Activated B cell treated with CpG ODN at 0.5 μM for 24 hours (primary cell): ENCODE measurements at regions of chr5 and their contacts with region 1.

Region 1: DNA sequence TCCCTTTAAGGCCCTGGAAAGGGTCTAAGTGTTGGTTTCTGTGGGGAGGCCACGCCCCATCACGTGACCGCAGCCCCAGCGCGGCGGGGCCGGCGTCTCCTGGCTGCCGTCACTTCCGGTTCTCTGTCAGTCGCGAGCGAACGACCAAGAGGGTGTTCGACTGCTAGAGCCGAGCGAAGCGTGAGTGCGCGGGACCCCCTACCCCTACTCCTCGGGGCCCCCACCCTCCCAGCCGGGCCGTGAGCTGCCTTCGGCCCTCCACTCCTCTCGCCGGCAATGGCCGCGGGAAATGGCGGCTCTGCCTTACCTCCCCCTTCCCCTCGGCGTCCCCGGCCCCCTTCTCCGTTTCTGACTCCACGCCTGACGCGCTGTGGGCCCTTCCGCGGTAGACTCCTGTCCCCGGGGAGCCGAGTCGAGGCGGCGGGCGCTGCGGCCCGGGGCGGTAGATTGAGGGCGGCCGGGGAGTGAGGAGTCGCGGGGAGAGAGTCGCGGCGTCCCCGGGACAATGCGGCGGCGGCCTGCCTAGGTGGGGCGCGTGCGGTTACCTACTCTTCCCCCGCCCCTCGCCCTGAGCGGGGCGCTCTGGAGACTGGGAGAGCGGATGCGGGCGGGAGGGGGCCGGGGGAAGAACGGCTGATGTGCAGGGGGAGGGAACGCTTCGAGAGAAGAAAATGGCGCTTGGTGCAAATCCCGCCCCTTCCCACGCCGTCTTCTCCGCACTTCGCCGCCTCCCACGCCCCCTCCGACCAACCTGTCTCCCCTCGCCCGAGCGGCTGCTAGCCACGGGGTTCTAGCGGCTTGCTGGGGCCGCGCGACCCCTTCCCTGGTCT is at the start of gene SUB1:
- DNase-seq: peak; percentile 88
- ATAC-seq: peak; percentile 60
- H3K4me3 Mint-ChIP-seq: peak within 1 kb of the TSS; percentile 91
- H3K27ac Mint-ChIP-seq: peak within 1 kb of the TSS; percentile 95
- H3K4me1 Mint-ChIP-seq: peaks cover 85% of the 10 kb centered on the region
- H3K27me3 Mint-ChIP-seq: no peaks in the 10 kb centered on the region
- CTCF ChIP-seq: no peak
- total RNA-seq, gene SUB1: 213 and 237 TPM in 2 replicates

Region 2: DNA sequence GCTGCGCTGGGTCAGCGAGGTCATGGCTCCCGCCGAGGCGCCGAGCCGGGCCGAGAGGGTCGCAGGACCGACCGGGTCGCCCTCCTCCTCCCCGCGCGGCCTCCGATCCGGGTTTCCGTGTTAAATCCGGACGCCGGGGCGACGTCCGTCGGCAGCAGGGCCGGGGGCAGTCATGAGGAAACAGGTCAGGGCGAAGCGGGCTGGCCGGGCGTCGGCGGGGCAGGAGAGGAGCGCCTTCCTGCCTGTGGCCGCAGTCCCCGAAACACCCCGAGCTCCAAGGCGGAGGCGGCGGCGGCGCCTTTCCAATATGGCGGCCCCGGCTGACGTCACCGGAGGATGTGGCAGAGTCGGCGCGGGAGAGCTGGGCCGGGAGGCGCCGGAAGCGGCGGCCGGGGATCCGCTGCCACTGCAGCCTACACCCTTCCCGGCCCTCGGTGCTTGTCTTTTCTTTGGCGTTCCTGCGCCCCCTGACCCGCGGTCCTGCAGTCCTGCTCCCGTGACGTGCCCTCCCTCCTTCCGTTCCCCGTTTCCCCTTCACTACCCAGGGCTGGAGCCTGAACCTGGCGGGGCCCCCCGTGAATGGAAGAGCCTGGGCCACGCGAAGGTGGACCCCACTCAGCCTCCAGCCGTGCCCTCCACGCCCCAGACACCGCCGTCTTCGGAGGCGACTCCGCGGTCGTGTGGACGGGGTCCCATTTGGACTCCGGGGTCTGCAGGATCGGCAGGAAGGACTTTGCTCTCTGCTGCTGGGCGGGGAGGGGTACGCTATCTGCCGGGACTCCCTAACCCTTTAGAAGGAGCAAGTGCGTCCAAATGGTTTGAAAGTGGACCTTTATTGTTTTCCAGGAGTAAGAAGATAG is 411.4 kb before region 1 on chr5 and contains the start of gene GOLPH3:
- CTCF ChIA-PET with region 1: no interaction called
- POLR2A ChIA-PET with region 1: interaction called, 4 read pairs
- intact Hi-C with region 1: loop called (anchors 1 kb)
- DNase-seq: peak; percentile 86
- ATAC-seq: peak; percentile 89
- H3K4me3 Mint-ChIP-seq: peak within 1 kb of the TSS; percentile 96
- H3K27ac Mint-ChIP-seq: peak within 1 kb of the TSS; percentile 92
- H3K4me1 Mint-ChIP-seq: peaks cover 40% of the 10 kb centered on the region
- H3K27me3 Mint-ChIP-seq: no peaks in the 10 kb centered on the region
- CTCF ChIP-seq: no peak
- total RNA-seq, gene GOLPH3: 55.5 and 60.1 TPM in 2 replicates

Region 3: DNA sequence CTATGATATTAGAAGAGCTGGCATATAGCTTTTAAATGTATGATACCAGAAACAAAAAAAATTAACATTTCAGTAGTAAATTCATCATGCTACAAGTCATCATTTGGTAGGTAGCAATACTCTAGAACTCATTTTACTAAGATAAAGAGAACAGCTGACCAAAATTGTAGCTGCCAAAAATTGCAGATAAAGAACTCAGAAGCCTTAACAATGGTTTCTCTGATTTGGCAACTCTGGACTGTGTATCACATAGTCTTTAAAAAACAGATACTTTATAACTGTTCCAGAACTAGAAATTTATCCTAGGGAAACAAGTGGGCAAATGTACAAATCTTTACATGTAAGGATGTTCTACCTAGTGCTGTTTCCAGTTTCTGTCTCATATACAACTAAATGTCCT is 175.0 kb before region 1 on chr5:
- CTCF ChIA-PET with region 1: interaction called, 10 read pairs
- POLR2A ChIA-PET with region 1: no interaction called
- intact Hi-C with region 1: loop called (anchors 10 kb)
- DNase-seq: no peak
- ATAC-seq: no peak
- H3K4me3 Mint-ChIP-seq: no peak overlapping the region
- H3K27ac Mint-ChIP-seq: no peak overlapping the region
- H3K4me1 Mint-ChIP-seq: peaks cover 10% of the 10 kb centered on the region
- H3K27me3 Mint-ChIP-seq: no peaks in the 10 kb centered on the region
- CTCF ChIP-seq: no peak

Region 4: DNA sequence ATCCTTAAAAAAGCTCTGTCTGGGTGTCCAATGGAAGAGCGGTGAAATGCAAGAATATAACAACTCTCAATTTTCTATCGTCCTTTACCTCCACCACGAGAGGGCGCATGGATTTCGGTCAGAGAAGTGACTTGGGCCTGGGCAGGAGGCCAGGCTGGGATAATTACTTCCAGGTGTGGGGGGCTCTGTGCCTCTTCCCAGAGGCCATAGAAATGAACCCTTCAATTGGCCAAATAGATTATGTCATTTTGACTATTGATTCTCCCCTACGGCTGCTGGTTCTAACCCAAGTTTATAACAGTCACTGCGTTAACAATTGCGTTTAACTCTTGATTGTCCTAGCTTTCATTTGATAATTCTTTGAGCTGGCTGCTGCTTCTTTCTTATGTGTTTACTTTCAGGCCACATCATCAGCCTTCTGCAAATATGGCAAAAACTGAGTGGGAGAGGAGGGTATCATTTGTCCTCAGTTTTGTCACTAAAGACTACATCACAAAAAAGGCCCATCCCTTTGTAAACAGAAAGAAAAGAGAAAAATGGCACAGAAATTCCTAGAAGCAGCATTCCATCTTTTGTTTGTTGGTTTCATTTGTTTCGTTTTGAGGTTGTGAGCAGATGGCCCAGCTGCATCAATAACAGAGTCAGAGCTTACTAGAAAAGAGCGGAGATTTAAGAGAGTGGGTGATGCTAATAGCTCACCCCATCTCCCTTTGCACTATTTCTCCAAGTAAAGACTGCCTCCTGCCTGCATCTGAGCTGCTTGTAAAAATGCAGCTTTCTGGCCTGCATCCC is 95.7 kb before region 1 on chr5:
- CTCF ChIA-PET with region 1: interaction called, 366 read pairs
- POLR2A ChIA-PET with region 1: interaction called, 20 read pairs
- intact Hi-C with region 1: loop called (anchors 1 kb)
- DNase-seq: peak; percentile 49
- ATAC-seq: peak; percentile 71
- H3K4me3 Mint-ChIP-seq: no peak overlapping the region
- H3K27ac Mint-ChIP-seq: no peak overlapping the region
- H3K4me1 Mint-ChIP-seq: peaks cover 5% of the 10 kb centered on the region
- H3K27me3 Mint-ChIP-seq: peaks cover 8% of the 10 kb centered on the region
- CTCF ChIP-seq: peak; percentile 63

Region 5: DNA sequence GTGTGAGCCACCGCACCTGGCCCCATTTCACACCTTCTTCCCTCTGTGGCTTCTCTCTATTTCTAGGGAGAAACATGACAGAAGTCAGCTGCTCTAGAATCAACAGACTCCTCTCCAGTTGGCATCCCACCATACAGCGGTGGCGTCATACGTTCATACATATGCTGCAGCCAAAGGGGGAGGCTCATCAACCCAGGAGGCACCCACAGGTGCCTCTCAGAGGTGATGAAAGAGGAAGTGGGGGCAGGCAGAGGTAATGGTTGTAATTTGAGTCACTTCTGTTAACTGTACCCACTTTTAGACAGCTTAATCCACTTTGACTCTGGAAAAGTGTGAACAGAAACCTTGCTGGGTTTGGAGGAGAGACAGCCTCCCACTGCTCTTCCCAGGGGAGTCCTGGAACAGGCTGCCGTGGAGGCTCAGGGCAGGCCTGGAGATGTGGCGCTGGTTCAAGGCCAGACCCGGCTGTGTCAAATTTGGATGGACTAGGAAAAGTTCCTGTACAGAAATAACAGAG is 47.6 kb before region 1 on chr5:
- CTCF ChIA-PET with region 1: interaction called, 18 read pairs
- POLR2A ChIA-PET with region 1: interaction called, 32 read pairs
- intact Hi-C with region 1: loop called (anchors 1 kb)
- DNase-seq: peak; percentile 33
- ATAC-seq: peak; percentile 93
- H3K4me3 Mint-ChIP-seq: peak overlapping the region; percentile 56
- H3K27ac Mint-ChIP-seq: peak overlapping the region; percentile 81
- H3K4me1 Mint-ChIP-seq: peaks cover 70% of the 10 kb centered on the region
- H3K27me3 Mint-ChIP-seq: no peaks in the 10 kb centered on the region
- CTCF ChIP-seq: no peak

Region 6: GRCh38 chr5:33440482-33441240 is 855.0 kb after region 1 on chr5 and contains the start of gene TARS1:
- CTCF ChIA-PET with region 1: interaction called, 3 read pairs
- POLR2A ChIA-PET with region 1: no interaction called
- intact Hi-C with region 1: loop called (anchors 1 kb)
- DNase-seq: peak; percentile 89
- ATAC-seq: peak; percentile 95
- H3K4me3 Mint-ChIP-seq: no peak within 1 kb of the TSS
- H3K27ac Mint-ChIP-seq: no peak within 1 kb of the TSS
- H3K4me1 Mint-ChIP-seq: peaks cover 21% of the 10 kb centered on the region
- H3K27me3 Mint-ChIP-seq: no peaks in the 10 kb centered on the region
- CTCF ChIP-seq: no peak
- total RNA-seq, gene TARS1: 176 and 180 TPM in 2 replicates